GM12878 (cell line): ENCODE measurements at regions of chr15 and their contacts with region 1.

Region 1: GRCh38 chr15:39426552-39427532 is 154.0 kb upstream of the THBS1 start:
- DNase-seq: peak; percentile 69
- ATAC-seq: peak; percentile 94
- H3K4me3 ChIP-seq: no peak overlapping the region; the same call in 1 of the 2 replicates
- H3K27ac ChIP-seq: no peak overlapping the region
- H3K4me1 ChIP-seq: peaks cover 25% of the 10 kb centered on the region
- H3K27me3 ChIP-seq: no peaks in the 10 kb centered on the region
- CTCF ChIP-seq: 0 out of 6 replicates have a peak, but pooled peaks of 1 of the 3 experiments have one; percentile 5
- EP300 ChIP-seq: peak; percentile 76 to 91; a peak in 3 of 4 replicates
- POLR2A ChIP-seq: no peak
- RAD21 ChIP-seq: no peak

Region 2: GRCh38 chr15:39132954-39133600 is 293.8 kb before region 1 on chr15:
- CTCF ChIA-PET with region 1: no interaction called
- POLR2A ChIA-PET with region 1: no interaction called
- RAD21 ChIA-PET with region 1: no interaction called
- SMC1A ChIA-PET with region 1: no interaction called
- in situ Hi-C with region 1: no loop called
- intact Hi-C with region 1: loop called (anchors 10 kb)
- DNase-seq: no peak
- ATAC-seq: no peak
- H3K4me3 ChIP-seq: no peak overlapping the region
- H3K27ac ChIP-seq: no peak overlapping the region
- H3K4me1 ChIP-seq: no peaks in the 10 kb centered on the region
- H3K27me3 ChIP-seq: 0 out of 4 replicates have a peak, but pooled peaks cover 0 to 2% of the 10 kb centered on the region in 2 experiments
- CTCF ChIP-seq: no peak
- EP300 ChIP-seq: no peak
- POLR2A ChIP-seq: no peak
- RAD21 ChIP-seq: no peak